WTC11 (cell line): ENCODE measurements at regions of chr3 and their contacts with region 1.

Region 1: GRCh38 chr3:46895204-46895660 is 17.7 kb downstream of the PTH1R start:
- DNase-seq: peak; percentile 63
- ATAC-seq: no peak
- H3K4me3 Mint-ChIP-seq: no peak overlapping the region
- H3K27ac Mint-ChIP-seq: no peak overlapping the region
- H3K4me1 Mint-ChIP-seq: peaks cover 11% of the 10 kb centered on the region
- H3K27me3 Mint-ChIP-seq: peaks cover 73% of the 10 kb centered on the region
- CTCF ChIP-seq: peak; percentile 52

Region 2: GRCh38 chr3:46629551-46630517 is 265.4 kb before region 1 on chr3:
- CTCF ChIA-PET with region 1: no interaction called
- POLR2A ChIA-PET with region 1: no interaction called
- DNase-seq: peak; percentile 91
- ATAC-seq: peak; percentile 89
- H3K4me3 Mint-ChIP-seq: peak overlapping the region; percentile 27
- H3K27ac Mint-ChIP-seq: peak overlapping the region; percentile 72
- H3K4me1 Mint-ChIP-seq: peaks cover 51% of the 10 kb centered on the region
- H3K27me3 Mint-ChIP-seq: no peaks in the 10 kb centered on the region; the same call in 1 of the 2 replicates
- CTCF ChIP-seq: peak; percentile 44; the same call in 1 of the 2 replicates

Region 3: DNA sequence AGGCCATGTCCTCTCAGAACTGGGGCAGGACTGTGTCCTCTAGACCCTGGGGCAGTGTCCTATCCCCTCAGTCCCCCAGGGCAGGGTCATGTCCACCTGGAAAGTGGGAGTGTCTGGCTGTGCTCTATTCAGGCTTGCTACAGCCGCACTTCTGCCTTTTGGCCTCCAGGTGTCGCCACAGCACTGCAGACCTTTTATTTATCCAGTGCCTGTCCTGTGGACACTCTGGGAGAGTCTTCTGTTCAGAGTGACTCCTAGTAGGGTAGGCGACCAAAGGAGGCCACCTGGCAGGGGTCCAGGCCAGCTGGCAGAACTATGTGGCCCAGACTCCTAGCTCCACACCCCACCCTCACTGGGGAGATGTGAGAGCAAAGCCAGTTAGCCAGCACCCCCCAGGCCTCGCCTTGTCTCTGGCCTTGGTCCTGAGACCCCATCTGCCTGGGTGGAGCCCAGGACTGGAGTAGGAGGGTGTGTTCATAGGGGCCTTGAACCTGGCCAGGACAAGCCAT is 190.2 kb before region 1 on chr3:
- CTCF ChIA-PET with region 1: interaction called, 13 read pairs
- POLR2A ChIA-PET with region 1: no interaction called
- DNase-seq: peak; percentile 83
- ATAC-seq: peak; percentile 78
- H3K4me3 Mint-ChIP-seq: no peak overlapping the region
- H3K27ac Mint-ChIP-seq: no peak overlapping the region
- H3K4me1 Mint-ChIP-seq: peaks cover 11% of the 10 kb centered on the region
- H3K27me3 Mint-ChIP-seq: peaks cover 29% of the 10 kb centered on the region
- CTCF ChIP-seq: peak; percentile 97

Region 4: DNA sequence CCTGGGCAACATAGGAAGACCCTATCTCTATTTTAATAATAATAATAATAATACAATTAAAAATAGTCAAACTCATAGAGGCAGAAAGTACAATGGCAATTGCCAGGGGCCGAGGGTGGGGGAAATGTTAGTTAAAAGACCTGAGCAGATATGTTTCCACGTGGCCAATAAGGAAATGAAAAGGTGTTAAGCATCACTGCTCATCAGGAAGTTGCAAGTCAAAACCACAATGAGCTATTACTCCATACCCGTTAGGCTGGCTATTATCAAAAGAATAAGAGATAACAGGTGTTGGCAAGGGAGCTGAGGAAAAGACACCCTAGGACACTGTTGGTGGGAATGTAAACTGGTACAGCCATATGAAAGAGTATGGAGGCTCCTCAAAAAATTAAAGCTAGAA is 117.1 kb before region 1 on chr3:
- CTCF ChIA-PET with region 1: no interaction called
- POLR2A ChIA-PET with region 1: no interaction called
- DNase-seq: no peak
- ATAC-seq: no peak
- H3K4me3 Mint-ChIP-seq: no peak overlapping the region
- H3K27ac Mint-ChIP-seq: no peak overlapping the region
- H3K4me1 Mint-ChIP-seq: no peaks in the 10 kb centered on the region
- H3K27me3 Mint-ChIP-seq: peaks cover 4% of the 10 kb centered on the region
- CTCF ChIP-seq: no peak

Region 5: GRCh38 chr3:46797458-46797857 is 97.8 kb before region 1 on chr3:
- CTCF ChIA-PET with region 1: no interaction called
- POLR2A ChIA-PET with region 1: no interaction called
- DNase-seq: no peak
- ATAC-seq: no peak
- H3K4me3 Mint-ChIP-seq: no peak overlapping the region
- H3K27ac Mint-ChIP-seq: no peak overlapping the region
- H3K4me1 Mint-ChIP-seq: no peaks in the 10 kb centered on the region
- H3K27me3 Mint-ChIP-seq: peaks cover 15% of the 10 kb centered on the region
- CTCF ChIP-seq: no peak